ENCODE measurements at regions of chr19 and their contacts with region 1.

Region 1: GRCh38 chr19:58386576-58387337 is at the start of gene RPS5:
- DNase-seq: peak; percentile 95 to 100 (median 98)
- H3K4me3 ChIP-seq: peak within 1 kb of the TSS; percentile 60 to 87 (median 84)
- H3K4me3 Mint-ChIP-seq: peak within 1 kb of the TSS; percentile 88 to 95
- H3K27ac ChIP-seq: peak within 1 kb of the TSS; percentile 96 to 98
- H3K27ac Mint-ChIP-seq: peak within 1 kb of the TSS; percentile 93 to 97 (median 96)
- H3K4me1 ChIP-seq: peaks cover 29 to 35% of the 10 kb centered on the region in 2 donors
- H3K4me1 Mint-ChIP-seq: peaks cover 36% of the 10 kb centered on the region
- H3K27me3 ChIP-seq: no peaks in the 10 kb centered on the region
- H3K27me3 Mint-ChIP-seq: peaks cover 0 to 2% (median 0%) of the 10 kb centered on the region in 3 donors
- CTCF ChIP-seq: no peak
- polyA plus RNA-seq, gene RPS5: 485 to 1,381 (median 580) TPM

Region 2: GRCh38 chr19:58305065-58305931 is 81.5 kb before region 1 on chr19 and contains the start of gene ERVK3-1:
- intact Hi-C with region 1: loop called in 1 of 2 experiments (anchors 2 kb)
- DNase-seq: peak; percentile 99
- H3K4me3 ChIP-seq: peak within 1 kb of the TSS; percentile 60 to 90 (median 80)
- H3K4me3 Mint-ChIP-seq: peak within 1 kb of the TSS; percentile 91 to 99
- H3K27ac ChIP-seq: peak within 1 kb of the TSS; percentile 65 to 97
- H3K27ac Mint-ChIP-seq: peak within 1 kb of the TSS; percentile 96 to 99 (median 98)
- H3K4me1 ChIP-seq: peaks cover 12 to 16% of the 10 kb centered on the region in 2 donors
- H3K4me1 Mint-ChIP-seq: peaks cover 16% of the 10 kb centered on the region
- H3K27me3 ChIP-seq: no peaks in the 10 kb centered on the region
- H3K27me3 Mint-ChIP-seq: peaks cover 0 to 2% (median 0%) of the 10 kb centered on the region in 3 donors
- CTCF ChIP-seq: no peak
- polyA plus RNA-seq, gene ERVK3-1: 34.6 to 61.5 (median 38.8) TPM

Region 3: DNA sequence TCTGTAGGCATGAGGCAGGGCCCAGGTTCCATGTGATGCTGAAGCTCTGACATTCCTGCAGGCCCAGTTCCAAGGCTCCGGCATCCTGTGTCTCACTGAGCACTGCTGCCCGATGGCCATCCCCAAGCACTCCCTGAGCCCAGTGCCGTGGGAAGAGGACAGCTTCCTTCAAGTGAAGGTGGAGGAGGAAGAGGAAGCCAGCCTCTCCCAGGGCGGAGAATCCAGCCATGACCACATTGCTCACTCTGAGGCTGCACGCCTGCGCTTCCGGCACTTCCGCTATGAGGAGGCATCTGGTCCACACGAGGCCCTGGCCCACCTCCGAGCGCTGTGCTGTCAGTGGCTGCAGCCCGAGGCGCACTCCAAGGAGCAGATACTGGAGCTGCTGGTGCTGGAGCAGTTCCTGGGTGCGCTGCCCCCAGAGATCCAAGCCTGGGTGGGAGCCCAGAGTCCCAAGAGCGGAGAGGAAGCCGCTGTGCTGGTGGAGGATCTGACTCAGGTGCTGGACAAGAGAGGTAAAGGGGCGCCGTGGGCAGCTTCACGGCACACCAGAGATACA is 52.0 kb before region 1 on chr19:
- intact Hi-C with region 1: no loop called
- DNase-seq: no peak
- H3K4me3 ChIP-seq: no peak overlapping the region
- H3K4me3 Mint-ChIP-seq: no peak overlapping the region
- H3K27ac ChIP-seq: no peak overlapping the region
- H3K27ac Mint-ChIP-seq: peak overlapping the region in 1 of 7 donors; percentile 42
- H3K4me1 ChIP-seq: no peaks in the 10 kb centered on the region
- H3K4me1 Mint-ChIP-seq: no peaks in the 10 kb centered on the region
- H3K27me3 ChIP-seq: no peaks in the 10 kb centered on the region
- H3K27me3 Mint-ChIP-seq: peaks cover 0 to 2% (median 1%) of the 10 kb centered on the region in 3 donors
- CTCF ChIP-seq: no peak

Region 4: DNA sequence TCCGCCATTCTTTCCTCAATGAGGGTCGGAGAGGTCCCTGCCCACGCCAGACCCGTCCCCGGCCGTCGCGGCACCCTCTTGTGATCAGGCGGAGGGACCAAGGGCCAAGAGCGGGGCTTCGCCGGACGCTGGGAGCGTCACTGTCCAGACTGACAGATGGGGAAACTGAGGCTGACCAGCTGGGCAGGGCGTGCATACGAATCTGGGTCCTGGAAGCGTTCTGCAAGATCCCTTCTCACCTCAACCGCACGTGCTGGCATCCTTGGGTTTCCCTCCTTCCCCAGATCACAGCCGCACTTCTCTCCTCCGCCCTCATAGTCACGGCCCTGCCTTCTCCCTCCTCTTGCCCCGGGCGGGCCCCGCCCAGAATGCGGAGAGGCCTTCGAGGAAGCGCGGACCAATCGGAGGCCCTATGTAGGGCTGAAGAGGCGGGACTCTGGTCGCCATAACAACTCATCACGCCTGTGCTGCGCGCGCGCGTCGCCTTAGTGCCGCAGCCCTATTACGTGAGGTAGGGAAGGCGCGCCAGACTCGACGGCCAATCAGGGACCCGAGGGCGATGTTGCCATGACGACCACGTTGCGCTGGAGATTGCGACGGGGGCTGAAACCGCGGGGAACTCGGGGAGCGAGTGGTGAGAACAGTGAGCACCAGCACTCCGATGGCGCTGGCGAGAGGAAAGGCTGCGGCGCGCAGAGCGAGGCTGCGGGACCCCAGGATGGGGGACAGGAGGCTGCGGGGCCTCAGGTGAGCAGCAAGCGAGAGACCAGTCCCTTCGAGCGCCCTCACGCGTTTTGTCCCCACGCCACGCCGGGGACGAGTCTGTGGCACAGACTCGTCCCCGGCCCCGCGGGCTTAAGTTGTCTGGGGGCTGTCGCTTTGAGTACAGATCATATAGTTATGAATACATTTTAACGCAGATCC is 14.4 kb after region 1 on chr19:
- intact Hi-C with region 1: no loop called
- DNase-seq: peak; percentile 99 to 100 (median 100)
- H3K4me3 ChIP-seq: peak overlapping the region; percentile 35 to 72 (median 53)
- H3K4me3 Mint-ChIP-seq: peak overlapping the region; percentile 81 to 88
- H3K27ac ChIP-seq: peak overlapping the region; percentile 3 to 55
- H3K27ac Mint-ChIP-seq: peak overlapping the region; percentile 68 to 91 (median 78)
- H3K4me1 ChIP-seq: peaks cover 14% of the 10 kb centered on the region in 2 donors
- H3K4me1 Mint-ChIP-seq: peaks cover 10% of the 10 kb centered on the region
- H3K27me3 ChIP-seq: peaks cover 0 to 18% of the 10 kb centered on the region in 2 donors
- H3K27me3 Mint-ChIP-seq: peaks cover 18 to 25% (median 24%) of the 10 kb centered on the region in 3 donors
- CTCF ChIP-seq: no peak

Measured in CD14-positive monocyte (primary cell).